ENCODE measurements at regions of chr7 and their contacts with region 1.

Region 1: GRCh38 chr7:132394283-132395198 is 181.7 kb downstream of the PLXNA4 start:
- DNase-seq: peak; percentile 59
- H3K4me3 Mint-ChIP-seq: no peak overlapping the region
- H3K27ac Mint-ChIP-seq: peak overlapping the region; percentile 61
- H3K4me1 Mint-ChIP-seq: peaks cover 39% of the 10 kb centered on the region
- H3K27me3 Mint-ChIP-seq: peaks cover 31% of the 10 kb centered on the region

Region 2: DNA sequence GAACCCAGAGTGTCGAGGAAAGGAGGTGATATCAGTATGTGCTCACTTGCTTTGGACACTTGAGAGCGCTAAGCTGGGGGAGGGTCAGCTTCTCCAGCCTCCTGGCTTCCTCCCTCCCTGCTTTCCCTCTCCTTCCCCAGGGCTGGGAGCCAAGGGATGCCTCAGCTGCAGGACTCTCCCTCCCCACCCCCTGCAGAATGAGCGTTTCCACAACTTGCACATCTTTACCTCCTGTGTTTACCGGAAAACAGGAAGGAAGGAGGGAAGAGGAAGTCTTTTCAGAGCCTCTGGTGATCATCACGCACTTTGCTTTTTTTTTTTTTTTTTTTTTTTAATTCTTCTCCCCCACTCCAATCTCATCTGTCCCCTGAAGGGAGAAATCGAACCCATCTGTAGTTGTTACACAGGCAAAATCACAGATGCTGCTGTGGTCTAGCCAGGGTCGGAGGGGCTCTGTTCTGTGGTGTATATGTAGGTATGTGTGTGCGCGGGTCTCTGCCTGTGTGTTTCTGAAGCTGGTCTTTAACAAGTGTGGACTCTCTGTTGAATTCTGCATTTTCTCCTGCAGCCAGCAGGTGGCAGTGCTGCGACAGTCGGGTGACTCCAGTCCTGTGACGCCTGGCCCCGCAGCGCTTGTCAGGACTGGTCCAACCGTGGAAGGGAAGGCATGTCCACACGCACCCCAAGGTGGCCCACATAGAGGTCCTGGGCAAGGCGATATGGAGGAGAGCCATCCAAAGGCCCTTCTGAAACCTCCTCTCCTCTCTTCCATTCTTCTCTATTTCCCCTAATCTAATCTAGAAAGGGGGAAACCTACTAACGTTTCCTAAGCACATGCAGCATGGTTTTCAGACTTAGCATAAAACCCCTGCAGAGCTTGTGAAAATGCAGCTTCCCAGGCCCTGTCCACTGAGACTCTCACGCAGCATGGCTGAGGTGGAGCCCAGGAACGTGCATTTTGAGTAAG is 75.9 kb before region 1 on chr7:
- CTCF ChIA-PET with region 1: interaction called, 23 read pairs
- DNase-seq: peak; percentile 88
- H3K4me3 Mint-ChIP-seq: peak overlapping the region; percentile 4
- H3K27ac Mint-ChIP-seq: no peak overlapping the region
- H3K4me1 Mint-ChIP-seq: peaks cover 50% of the 10 kb centered on the region
- H3K27me3 Mint-ChIP-seq: peaks cover 69% of the 10 kb centered on the region

Region 3: DNA sequence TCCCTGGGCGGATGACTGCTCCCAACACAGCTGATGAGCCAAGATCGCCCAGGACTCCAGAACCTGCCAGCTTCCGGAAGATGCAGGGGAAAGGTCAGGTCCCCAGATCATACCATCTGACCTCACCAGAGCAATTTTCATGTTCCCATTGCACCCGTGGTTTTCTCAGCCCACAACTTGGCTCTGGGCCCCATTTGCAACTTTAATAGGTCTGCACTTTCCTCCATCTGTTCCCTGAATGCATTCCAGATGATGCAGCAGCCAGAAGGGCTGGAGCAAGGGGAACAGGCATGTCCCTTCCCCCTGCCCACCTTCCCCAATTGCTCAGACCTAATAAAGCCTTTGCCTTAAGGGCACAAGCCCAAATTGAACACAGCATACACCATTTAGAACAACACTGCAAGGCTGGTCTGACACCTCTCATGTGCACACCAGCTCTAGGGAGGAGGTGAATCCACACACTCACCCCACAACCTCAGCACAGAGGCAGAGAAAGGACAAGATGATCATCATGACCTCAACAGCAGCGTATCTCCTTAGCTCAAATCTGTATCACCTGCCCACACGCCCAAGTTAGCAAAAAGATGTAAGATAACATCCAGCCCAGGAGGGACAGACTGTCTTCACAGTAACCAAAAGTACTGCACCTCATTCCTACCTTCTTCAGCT is 94.2 kb after region 1 on chr7:
- CTCF ChIA-PET with region 1: interaction called, 13 read pairs
- DNase-seq: no peak
- H3K4me3 Mint-ChIP-seq: no peak overlapping the region
- H3K27ac Mint-ChIP-seq: no peak overlapping the region
- H3K4me1 Mint-ChIP-seq: peaks cover 81% of the 10 kb centered on the region
- H3K27me3 Mint-ChIP-seq: peaks cover 13% of the 10 kb centered on the region

Region 4: DNA sequence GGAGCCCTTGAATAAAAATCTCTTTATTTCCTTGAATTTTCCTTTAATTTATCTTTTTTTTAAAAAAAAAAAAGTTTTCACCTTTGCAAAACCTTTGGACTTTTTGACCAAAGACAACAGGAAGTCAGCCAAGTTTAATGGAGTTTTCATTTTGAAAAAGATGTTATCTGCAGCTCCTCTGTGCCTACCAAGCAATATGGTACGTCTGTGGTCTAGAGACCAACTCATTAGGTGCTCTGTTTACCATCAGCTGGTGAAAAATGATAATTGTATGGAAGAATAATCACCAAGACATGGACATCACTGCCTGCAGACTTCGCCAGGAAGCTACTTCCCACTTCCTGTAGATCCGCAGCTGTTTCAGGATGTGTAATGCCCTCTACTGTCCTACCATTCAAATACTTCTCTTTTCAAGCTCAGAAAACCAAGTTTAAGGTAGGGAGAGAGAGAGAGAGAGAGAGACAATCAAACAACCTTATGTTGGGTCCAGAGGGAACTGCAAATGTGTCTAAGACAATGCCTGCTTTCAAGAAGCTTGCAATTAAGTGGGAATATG is 163.0 kb after region 1 on chr7:
- CTCF ChIA-PET with region 1: interaction called, 72 read pairs
- DNase-seq: no peak
- H3K4me3 Mint-ChIP-seq: no peak overlapping the region
- H3K27ac Mint-ChIP-seq: no peak overlapping the region
- H3K4me1 Mint-ChIP-seq: peaks cover 37% of the 10 kb centered on the region
- H3K27me3 Mint-ChIP-seq: peaks cover 43% of the 10 kb centered on the region

Measured in activated naive CD4-positive, alpha-beta T cell treated with anti-CD3 and anti-CD28 coated beads, Interleukin-2, amount 10 ng/mL, durations not matched to agents 7 days and 5 days (primary cell).